Activated naive CD4-positive, alpha-beta T cell treated with anti-CD3 and anti-CD28 coated beads for 36 hours (primary cell): ENCODE measurements at regions of chr4 and their contacts with region 1.

Region 1: DNA sequence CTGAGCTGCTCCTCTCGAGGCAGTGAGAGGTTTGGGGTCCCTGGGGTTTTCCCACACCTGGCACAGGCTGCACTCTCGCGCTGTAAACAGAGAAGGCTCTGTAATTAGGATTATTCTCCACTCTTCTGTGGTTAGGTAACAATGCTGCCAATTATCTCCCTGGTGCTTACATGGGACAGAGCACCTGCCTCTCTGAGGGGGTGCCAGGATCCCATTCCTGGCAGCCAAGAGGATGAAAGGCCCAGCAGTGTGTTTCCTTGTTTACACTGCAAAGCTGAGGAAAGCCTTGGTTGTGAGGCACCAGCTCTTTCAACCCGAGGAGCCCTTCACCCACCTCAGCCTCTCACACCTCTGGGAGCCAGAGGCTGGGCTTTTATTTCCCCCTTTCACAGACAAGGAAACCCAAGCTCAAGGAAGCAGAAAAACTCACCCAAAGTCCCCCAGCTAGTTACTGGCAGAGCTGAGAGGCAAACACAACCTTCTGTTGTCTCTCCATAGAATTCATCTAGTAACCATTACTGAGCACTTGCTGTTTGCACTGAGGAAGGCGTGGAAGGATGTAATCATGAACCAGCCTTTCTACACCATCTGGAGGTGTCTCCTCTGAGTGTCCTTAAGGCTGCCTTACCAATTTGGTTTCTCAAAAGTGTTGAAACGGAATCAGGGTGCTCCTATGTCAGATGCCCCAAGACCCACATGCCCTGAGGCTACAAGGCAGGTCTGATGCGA is 39.7 kb upstream of the PROM1 start:
- DNase-seq: no peak
- H3K4me3 Mint-ChIP-seq: no peak overlapping the region
- H3K27ac Mint-ChIP-seq: peak overlapping the region; percentile 85
- H3K4me1 Mint-ChIP-seq: peaks cover 25% of the 10 kb centered on the region
- H3K27me3 Mint-ChIP-seq: no peaks in the 10 kb centered on the region

Region 2: DNA sequence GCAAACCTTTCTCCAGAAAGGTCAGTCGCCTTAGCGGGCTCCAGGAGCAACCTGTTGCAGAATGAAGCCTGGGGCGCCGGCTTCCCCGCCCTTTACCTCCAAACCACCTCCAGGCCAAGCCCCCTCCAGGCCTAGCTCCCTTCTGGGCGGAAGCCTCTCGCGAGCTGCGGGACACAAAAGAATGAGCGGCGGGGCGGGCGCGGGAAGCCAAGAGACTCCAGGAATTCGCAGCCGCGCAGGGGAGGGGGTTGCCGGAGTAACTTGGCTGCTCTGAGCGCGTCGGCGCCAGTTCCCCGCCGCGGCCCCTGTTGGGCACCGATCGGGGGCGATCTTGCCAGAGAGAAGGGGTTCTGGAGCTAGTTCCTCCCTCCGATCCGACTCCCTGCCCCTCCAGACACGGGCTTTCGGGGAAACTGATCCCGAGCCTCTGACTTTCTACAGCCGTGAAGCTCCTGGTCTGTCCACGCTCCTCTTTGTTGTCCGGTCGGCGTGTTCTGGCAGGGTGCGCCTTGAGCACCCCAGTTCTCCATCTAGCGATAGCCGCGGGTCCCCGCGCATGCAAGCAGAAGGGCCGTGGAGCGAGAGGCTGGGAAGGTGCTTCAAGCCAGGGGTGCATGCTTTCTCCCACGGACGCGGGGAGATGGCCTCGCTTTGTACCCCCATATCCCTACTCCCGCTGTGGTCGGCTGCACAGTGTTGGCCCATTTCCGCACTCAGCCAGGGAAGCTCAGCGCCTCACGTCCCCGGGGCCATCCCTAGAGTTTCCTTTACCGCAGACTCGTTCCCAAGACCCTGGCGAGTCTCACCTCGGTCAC is 40.9 kb before region 1 on chr4:
- CTCF ChIA-PET with region 1: no interaction called
- intact Hi-C with region 1: loop called (anchors 1 kb)
- DNase-seq: peak; percentile 28
- H3K4me3 Mint-ChIP-seq: peak overlapping the region; percentile 60
- H3K27ac Mint-ChIP-seq: no peak overlapping the region
- H3K4me1 Mint-ChIP-seq: peaks cover 22% of the 10 kb centered on the region
- H3K27me3 Mint-ChIP-seq: peaks cover 74% of the 10 kb centered on the region

Region 3: GRCh38 chr4:16217300-16218051 is 94.0 kb after region 1 on chr4:
- CTCF ChIA-PET with region 1: no interaction called
- intact Hi-C with region 1: loop called (anchors 2 kb)
- DNase-seq: peak; percentile 10
- H3K4me3 Mint-ChIP-seq: peak overlapping the region; percentile 13
- H3K27ac Mint-ChIP-seq: peak overlapping the region; percentile 74
- H3K4me1 Mint-ChIP-seq: peaks cover 75% of the 10 kb centered on the region
- H3K27me3 Mint-ChIP-seq: no peaks in the 10 kb centered on the region